ENCODE measurements at regions of chr5 and their contacts with region 1.

Region 1: GRCh38 chr5:107571621-107572536 is 98.9 kb downstream of the EFNA5 start:
- DNase-seq: peak; percentile 98 to 99
- H3K4me3 ChIP-seq: peak overlapping the region; percentile 56
- H3K27ac ChIP-seq: peak overlapping the region; percentile 100
- H3K4me1 ChIP-seq: peaks cover 82% of the 10 kb centered on the region
- H3K27me3 ChIP-seq: no peaks in the 10 kb centered on the region
- CTCF ChIP-seq: peak; percentile 95

Region 2: GRCh38 chr5:106415541-106415940 is 1156.3 kb before region 1 on chr5:
- CTCF ChIA-PET with region 1: no interaction called
- POLR2A ChIA-PET with region 1: no interaction called
- intact Hi-C with region 1: loop called (anchors 10 kb)
- DNase-seq: peak; percentile 66 to 79
- H3K4me3 ChIP-seq: no peak overlapping the region
- H3K27ac ChIP-seq: no peak overlapping the region
- H3K4me1 ChIP-seq: peaks cover 12% of the 10 kb centered on the region
- H3K27me3 ChIP-seq: no peaks in the 10 kb centered on the region
- CTCF ChIP-seq: no peak

Region 3: DNA sequence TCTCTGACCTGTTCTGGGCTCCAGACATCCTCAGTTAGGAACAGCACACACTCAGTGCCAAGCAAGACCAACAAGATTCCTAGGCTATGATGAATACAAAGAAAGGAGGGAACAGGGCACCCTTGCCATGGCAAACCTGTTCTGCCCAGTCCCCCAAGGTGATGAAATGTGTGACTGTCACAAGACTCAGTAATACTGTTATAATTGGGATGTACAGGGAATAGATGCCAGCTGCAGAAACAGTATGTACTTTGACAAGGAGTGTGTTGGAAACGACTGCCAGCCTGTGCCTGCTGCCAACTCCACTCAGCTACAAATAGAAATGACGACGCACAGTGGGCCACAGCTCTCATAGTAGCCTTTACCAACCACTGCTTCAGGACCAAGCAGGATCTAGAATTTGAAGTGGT is 354.2 kb before region 1 on chr5:
- CTCF ChIA-PET with region 1: no interaction called
- POLR2A ChIA-PET with region 1: interaction called, 3 read pairs
- intact Hi-C with region 1: loop called (anchors 5 kb)
- DNase-seq: peak; percentile 76 to 96
- H3K4me3 ChIP-seq: peak overlapping the region; percentile 45; the same call in 1 of the 2 replicates
- H3K27ac ChIP-seq: peak overlapping the region; percentile 96
- H3K4me1 ChIP-seq: peaks cover 53% of the 10 kb centered on the region
- H3K27me3 ChIP-seq: no peaks in the 10 kb centered on the region
- CTCF ChIP-seq: no peak

Region 4: GRCh38 chr5:107389130-107389774 is 182.6 kb before region 1 on chr5:
- CTCF ChIA-PET with region 1: interaction called, 3 read pairs
- POLR2A ChIA-PET with region 1: interaction called, 3 read pairs
- intact Hi-C with region 1: loop called (anchors 1 kb)
- DNase-seq: peak; percentile 41 to 97
- H3K4me3 ChIP-seq: peak overlapping the region; percentile 2; the same call in 1 of the 2 replicates
- H3K27ac ChIP-seq: peak overlapping the region; percentile 94
- H3K4me1 ChIP-seq: peaks cover 49% of the 10 kb centered on the region
- H3K27me3 ChIP-seq: no peaks in the 10 kb centered on the region
- CTCF ChIP-seq: no peak

Region 5: DNA sequence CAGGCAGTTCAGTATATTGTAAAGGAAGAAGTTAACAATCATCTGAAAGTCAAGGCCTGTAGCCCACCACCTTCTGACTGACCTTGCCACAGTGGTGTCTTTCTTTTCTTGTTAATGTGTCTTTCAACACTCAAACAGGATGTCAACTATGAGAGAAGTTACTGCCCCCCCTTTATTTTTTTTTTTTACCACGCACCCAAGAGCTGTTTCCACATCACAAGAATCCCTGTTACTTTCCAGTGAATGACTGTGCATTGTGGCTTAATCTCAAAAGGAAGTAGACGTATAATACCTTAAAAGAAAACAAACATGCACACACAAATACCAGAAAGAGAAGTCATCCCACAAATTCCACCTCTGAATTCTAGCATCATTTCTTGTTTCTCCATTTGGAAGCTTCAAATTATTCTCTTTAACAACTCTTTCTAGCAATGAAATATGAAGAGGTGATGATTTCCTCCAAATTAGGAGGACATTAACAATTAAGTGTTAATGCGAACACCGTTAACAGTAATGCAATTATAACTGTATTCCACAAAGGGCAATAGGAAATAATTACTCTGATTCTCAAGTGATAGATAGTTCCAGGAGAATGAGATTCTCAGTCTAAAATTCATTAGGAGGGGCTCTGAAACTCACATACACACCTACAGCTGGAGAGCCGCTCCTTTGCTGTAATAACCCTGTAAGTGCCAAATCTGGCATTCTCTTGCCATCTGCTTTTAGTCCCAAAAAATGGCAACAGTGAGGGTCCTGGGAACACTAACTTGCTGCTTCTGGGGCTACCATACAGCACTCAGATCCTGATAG is 102.2 kb before region 1 on chr5:
- CTCF ChIA-PET with region 1: interaction called, 6 read pairs
- POLR2A ChIA-PET with region 1: interaction called, 12 read pairs
- intact Hi-C with region 1: loop called (anchors 1 kb)
- DNase-seq: peak; percentile 46 to 98
- H3K4me3 ChIP-seq: peak overlapping the region; percentile 22; the same call in 1 of the 2 replicates
- H3K27ac ChIP-seq: peak overlapping the region; percentile 96
- H3K4me1 ChIP-seq: peaks cover 94% of the 10 kb centered on the region
- H3K27me3 ChIP-seq: no peaks in the 10 kb centered on the region
- CTCF ChIP-seq: no peak

Region 6: DNA sequence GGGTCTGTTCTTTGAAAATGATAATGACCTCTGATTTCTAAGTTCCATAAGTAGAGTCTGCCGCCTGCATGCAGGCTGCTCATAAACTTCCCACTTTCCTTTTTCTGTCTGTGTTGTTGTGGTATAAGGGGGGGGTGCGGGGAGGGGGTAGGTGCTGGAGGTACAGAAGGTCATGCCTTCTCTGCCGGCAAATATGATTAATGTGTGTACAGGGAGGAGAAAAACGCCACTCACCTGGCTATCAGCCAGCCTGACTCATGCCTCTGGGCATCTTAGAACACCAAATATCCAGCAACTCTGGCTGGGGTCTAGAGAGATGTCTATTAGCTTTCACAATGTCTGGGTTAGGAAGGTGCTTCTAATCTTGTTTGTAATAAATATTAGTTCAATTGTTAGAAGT is 29.5 kb before region 1 on chr5:
- CTCF ChIA-PET with region 1: no interaction called
- POLR2A ChIA-PET with region 1: interaction called, 7 read pairs
- intact Hi-C with region 1: loop called (anchors 1 kb)
- DNase-seq: peak; percentile 88 to 97
- H3K4me3 ChIP-seq: peak overlapping the region; percentile 26; the same call in 1 of the 2 replicates
- H3K27ac ChIP-seq: peak overlapping the region; percentile 93
- H3K4me1 ChIP-seq: peaks cover 59% of the 10 kb centered on the region
- H3K27me3 ChIP-seq: no peaks in the 10 kb centered on the region
- CTCF ChIP-seq: no peak

Region 7: GRCh38 chr5:107624233-107624632 is 52.4 kb after region 1 on chr5:
- CTCF ChIA-PET with region 1: no interaction called
- POLR2A ChIA-PET with region 1: no interaction called
- intact Hi-C with region 1: no loop called
- DNase-seq: no peak
- H3K4me3 ChIP-seq: no peak overlapping the region
- H3K27ac ChIP-seq: no peak overlapping the region
- H3K4me1 ChIP-seq: peaks cover 12% of the 10 kb centered on the region; the same call in 1 of the 2 replicates
- H3K27me3 ChIP-seq: no peaks in the 10 kb centered on the region
- CTCF ChIP-seq: no peak